HepG2 (cell line): ENCODE measurements at regions of chr17 and their contacts with region 1.

Region 1: DNA sequence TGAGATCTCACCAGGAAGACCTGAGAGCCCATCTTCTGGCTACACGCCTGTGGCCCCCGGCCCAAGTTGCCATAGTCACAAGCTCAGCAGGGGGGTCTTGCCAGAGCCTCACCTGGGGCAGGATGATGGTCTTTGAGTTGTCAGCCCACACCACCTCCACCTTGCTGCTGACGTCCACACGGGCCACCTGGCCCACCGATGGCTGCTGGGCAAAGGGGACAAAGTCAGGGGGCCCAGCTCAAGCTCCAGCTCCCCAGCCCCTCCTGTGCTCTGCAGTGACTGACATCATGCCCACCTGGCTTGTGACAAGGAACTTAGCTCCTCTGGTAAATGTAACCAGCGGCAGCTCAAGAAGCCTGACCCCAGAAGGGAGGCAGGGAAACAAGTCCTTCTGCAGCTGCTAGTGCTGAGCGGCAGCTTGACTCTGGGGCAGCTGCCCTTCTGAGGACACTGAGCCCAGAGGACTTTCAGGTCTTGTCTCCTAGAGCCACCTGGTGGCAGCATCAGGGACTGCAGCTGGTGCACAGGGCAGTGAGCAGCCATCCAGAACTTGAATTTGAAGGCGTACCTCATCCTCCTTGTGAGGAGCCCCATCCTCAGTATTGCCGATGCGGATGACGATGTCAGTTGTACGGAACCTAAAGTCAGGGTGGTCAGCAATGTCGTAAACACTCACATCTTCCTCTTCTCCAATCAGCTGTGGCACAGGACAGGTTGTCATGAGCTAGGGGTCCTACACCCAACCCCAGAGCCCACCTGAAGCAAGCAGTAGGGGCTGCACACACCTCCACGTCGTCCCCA is 13.5 kb downstream of the SPHK1 start:
- DNase-seq: peak; percentile 80
- ATAC-seq: peak; percentile 87
- H3K4me3 ChIP-seq: no peak overlapping the region
- H3K27ac ChIP-seq: no peak overlapping the region
- H3K4me1 ChIP-seq: no peaks in the 10 kb centered on the region
- H3K27me3 ChIP-seq: no peaks in the 10 kb centered on the region
- CTCF ChIP-seq: peak; percentile 99
- EP300 ChIP-seq: no peak
- POLR2A ChIP-seq: no peak
- RAD21 ChIP-seq: peak; percentile 96

Region 2: DNA sequence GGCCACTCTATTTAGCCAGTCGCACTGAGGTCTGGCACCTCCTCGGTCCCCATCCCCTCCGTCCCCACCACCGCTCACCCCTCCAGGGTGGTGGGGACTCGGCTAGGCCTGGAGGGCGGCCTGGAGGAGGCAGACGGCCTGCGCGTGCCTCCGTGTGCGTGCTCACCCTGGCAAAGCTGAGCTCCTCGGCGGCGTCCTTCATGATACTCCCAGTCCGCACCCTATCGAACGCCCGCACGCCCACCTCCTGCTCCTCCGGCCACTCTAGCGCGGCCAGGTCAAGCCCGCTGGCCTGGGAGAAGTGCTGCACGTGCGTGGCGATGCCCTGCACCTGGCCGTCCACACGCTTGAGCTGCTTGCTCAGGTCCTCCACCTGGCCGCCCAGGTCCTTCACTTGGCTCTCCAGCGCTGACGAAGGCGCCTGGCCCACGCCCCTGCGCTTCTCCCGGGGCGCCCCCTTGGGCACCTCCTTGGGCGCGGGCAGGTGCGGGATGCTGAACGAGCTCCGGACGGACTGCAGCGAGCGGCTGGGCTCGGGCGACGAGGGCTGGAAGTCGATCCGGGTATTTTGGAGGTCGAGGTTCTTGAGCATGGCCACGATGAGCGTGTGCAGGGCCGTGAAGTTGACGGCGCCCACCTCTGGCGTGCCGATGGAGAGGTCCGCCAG is 90.5 kb before region 1 on chr17:
- CTCF ChIA-PET with region 1: interaction called, 14 read pairs
- POLR2A ChIA-PET with region 1: interaction called, 10 read pairs
- in situ Hi-C with region 1: loop called (anchors 5 kb)
- intact Hi-C with region 1: loop called (anchors 1 kb)
- DNase-seq: no peak
- ATAC-seq: peak; percentile 16
- H3K4me3 ChIP-seq: no peak overlapping the region
- H3K27ac ChIP-seq: no peak overlapping the region
- H3K4me1 ChIP-seq: no peaks in the 10 kb centered on the region
- H3K27me3 ChIP-seq: no peaks in the 10 kb centered on the region
- CTCF ChIP-seq: no peak
- EP300 ChIP-seq: no peak
- POLR2A ChIP-seq: peak in 1 of 2 experiments; percentile 43; a peak in 1 of 4 replicates
- RAD21 ChIP-seq: no peak

Region 3: GRCh38 chr17:76353599-76354316 is 44.1 kb before region 1 on chr17 and contains the start of gene PRPSAP1:
- CTCF ChIA-PET with region 1: no interaction called
- POLR2A ChIA-PET with region 1: interaction called, 1,379 read pairs
- in situ Hi-C with region 1: no loop called
- intact Hi-C with region 1: no loop called
- DNase-seq: peak; percentile 90
- ATAC-seq: peak; percentile 88
- H3K4me3 ChIP-seq: peak within 1 kb of the TSS; percentile 87 to 99 (median 98)
- H3K27ac ChIP-seq: peak within 1 kb of the TSS; percentile 99
- H3K4me1 ChIP-seq: peaks cover 59% of the 10 kb centered on the region
- H3K27me3 ChIP-seq: no peaks in the 10 kb centered on the region; a peak in 1 of 5 replicates
- CTCF ChIP-seq: peak; percentile 51
- EP300 ChIP-seq: peak in 1 of 2 experiments; percentile 3; a peak in 1 of 4 replicates
- POLR2A ChIP-seq: peak; percentile 98 to 100
- RAD21 ChIP-seq: peak; percentile 67
- total RNA-seq, gene PRPSAP1: 91.1 and 115 TPM in 2 replicates

Region 4: GRCh38 chr17:76376318-76377133 is 21.4 kb before region 1 on chr17:
- CTCF ChIA-PET with region 1: no interaction called
- POLR2A ChIA-PET with region 1: interaction called, 1,379 read pairs
- in situ Hi-C with region 1: no loop called
- intact Hi-C with region 1: no loop called
- DNase-seq: peak; percentile 100
- ATAC-seq: peak; percentile 88
- H3K4me3 ChIP-seq: peak overlapping the region; percentile 63 to 82 (median 66)
- H3K27ac ChIP-seq: peak overlapping the region; percentile 90
- H3K4me1 ChIP-seq: peaks cover 97% of the 10 kb centered on the region
- H3K27me3 ChIP-seq: no peaks in the 10 kb centered on the region
- CTCF ChIP-seq: peak; percentile 35; the same call in 1 of the 2 replicates
- EP300 ChIP-seq: peak; percentile 83 to 97; a peak in 3 of 4 replicates
- POLR2A ChIP-seq: peak in 1 of 2 experiments; percentile 83; a peak in 2 of 4 replicates
- RAD21 ChIP-seq: peak; percentile 53

Region 5: GRCh38 chr17:76467366-76467765 is 69.5 kb after region 1 on chr17 and contains the start of gene AANAT:
- CTCF ChIA-PET with region 1: no interaction called
- POLR2A ChIA-PET with region 1: no interaction called
- in situ Hi-C with region 1: no loop called
- intact Hi-C with region 1: no loop called
- DNase-seq: no peak
- ATAC-seq: no peak
- H3K4me3 ChIP-seq: 0 out of 6 replicates have a peak within 1 kb of the TSS, but pooled peaks of 1 of the 3 experiments have one; percentile 63
- H3K27ac ChIP-seq: no peak within 1 kb of the TSS
- H3K4me1 ChIP-seq: peaks cover 48% of the 10 kb centered on the region
- H3K27me3 ChIP-seq: peaks cover 2 to 21% of the 10 kb centered on the region in 2 experiments; a peak in 3 of 5 replicates
- CTCF ChIP-seq: no peak
- EP300 ChIP-seq: no peak
- POLR2A ChIP-seq: no peak
- RAD21 ChIP-seq: no peak
- total RNA-seq, gene AANAT: not detected in 2 replicates